Panc1 (cell line): ENCODE measurements at regions of chr15 and their contacts with region 1.

Region 1: GRCh38 chr15:63466378-63467192 is 37.8 kb upstream of the USP3 start:
- DNase-seq: no peak
- ATAC-seq: peak; percentile 86
- H3K4me3 ChIP-seq: no peak overlapping the region
- H3K27ac ChIP-seq: peak overlapping the region; percentile 52
- H3K4me1 ChIP-seq: peaks cover 29% of the 10 kb centered on the region
- H3K27me3 ChIP-seq: no peaks in the 10 kb centered on the region
- CTCF ChIP-seq: peak; percentile 84

Region 2: GRCh38 chr15:63517614-63518013 is 51.0 kb after region 1 on chr15:
- CTCF ChIA-PET with region 1: no interaction called
- POLR2A ChIA-PET with region 1: no interaction called
- in situ Hi-C with region 1: no loop called
- intact Hi-C with region 1: no loop called
- DNase-seq: no peak
- ATAC-seq: peak; percentile 63; the same call in 1 of the 2 replicates
- H3K4me3 ChIP-seq: no peak overlapping the region
- H3K27ac ChIP-seq: peak overlapping the region; percentile 57; the same call in 1 of the 2 replicates
- H3K4me1 ChIP-seq: peaks cover 71% of the 10 kb centered on the region
- H3K27me3 ChIP-seq: no peaks in the 10 kb centered on the region
- CTCF ChIP-seq: no peak

Region 3: DNA sequence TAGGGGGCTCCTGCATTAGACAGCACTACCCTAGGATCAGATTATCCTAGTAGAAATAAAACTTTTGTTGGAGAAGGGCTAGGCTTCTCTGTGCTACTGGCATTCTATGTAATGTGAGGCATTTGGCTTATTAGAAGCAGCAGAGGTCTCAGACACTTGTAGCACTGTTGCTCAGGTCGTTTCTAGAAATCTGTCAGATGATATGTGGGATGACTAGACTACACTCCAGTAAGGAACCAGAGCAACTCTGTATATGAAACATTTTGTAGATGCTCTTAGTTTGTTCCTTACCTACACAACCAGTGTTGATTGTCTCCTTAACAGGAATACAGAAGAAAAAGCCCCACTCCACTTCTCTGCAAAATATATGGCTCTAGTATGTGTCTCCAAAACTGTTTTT is 108.7 kb after region 1 on chr15:
- CTCF ChIA-PET with region 1: interaction called, 11 read pairs
- POLR2A ChIA-PET with region 1: no interaction called
- in situ Hi-C with region 1: no loop called
- intact Hi-C with region 1: no loop called
- DNase-seq: no peak
- ATAC-seq: no peak
- H3K4me3 ChIP-seq: no peak overlapping the region
- H3K27ac ChIP-seq: no peak overlapping the region
- H3K4me1 ChIP-seq: no peaks in the 10 kb centered on the region
- H3K27me3 ChIP-seq: no peaks in the 10 kb centered on the region
- CTCF ChIP-seq: no peak

Region 4: GRCh38 chr15:63599401-63600000 is 132.9 kb after region 1 on chr15:
- CTCF ChIA-PET with region 1: interaction called, 5 read pairs
- POLR2A ChIA-PET with region 1: interaction called, 4 read pairs
- in situ Hi-C with region 1: no loop called
- intact Hi-C with region 1: loop called (anchors 5 kb)
- DNase-seq: no peak
- ATAC-seq: peak; percentile 44
- H3K4me3 ChIP-seq: peak overlapping the region; percentile 70 to 73
- H3K27ac ChIP-seq: peak overlapping the region; percentile 91
- H3K4me1 ChIP-seq: peaks cover 16% of the 10 kb centered on the region
- H3K27me3 ChIP-seq: no peaks in the 10 kb centered on the region
- CTCF ChIP-seq: peak; percentile 87